Activated T-helper 2 cell treated with anti-CD3 and anti-CD28 coated beads, Interferon-gamma antibody, Interleukin-2, Interleukin-4, amounts not matched to agents 10 μg/mL and 5 μg/mL and 100 μg/mL, durations not matched to agents 14 hours and 24 hours and 36 hours (primary cell): ENCODE measurements at regions of chr1 and their contacts with region 1.

Region 1: DNA sequence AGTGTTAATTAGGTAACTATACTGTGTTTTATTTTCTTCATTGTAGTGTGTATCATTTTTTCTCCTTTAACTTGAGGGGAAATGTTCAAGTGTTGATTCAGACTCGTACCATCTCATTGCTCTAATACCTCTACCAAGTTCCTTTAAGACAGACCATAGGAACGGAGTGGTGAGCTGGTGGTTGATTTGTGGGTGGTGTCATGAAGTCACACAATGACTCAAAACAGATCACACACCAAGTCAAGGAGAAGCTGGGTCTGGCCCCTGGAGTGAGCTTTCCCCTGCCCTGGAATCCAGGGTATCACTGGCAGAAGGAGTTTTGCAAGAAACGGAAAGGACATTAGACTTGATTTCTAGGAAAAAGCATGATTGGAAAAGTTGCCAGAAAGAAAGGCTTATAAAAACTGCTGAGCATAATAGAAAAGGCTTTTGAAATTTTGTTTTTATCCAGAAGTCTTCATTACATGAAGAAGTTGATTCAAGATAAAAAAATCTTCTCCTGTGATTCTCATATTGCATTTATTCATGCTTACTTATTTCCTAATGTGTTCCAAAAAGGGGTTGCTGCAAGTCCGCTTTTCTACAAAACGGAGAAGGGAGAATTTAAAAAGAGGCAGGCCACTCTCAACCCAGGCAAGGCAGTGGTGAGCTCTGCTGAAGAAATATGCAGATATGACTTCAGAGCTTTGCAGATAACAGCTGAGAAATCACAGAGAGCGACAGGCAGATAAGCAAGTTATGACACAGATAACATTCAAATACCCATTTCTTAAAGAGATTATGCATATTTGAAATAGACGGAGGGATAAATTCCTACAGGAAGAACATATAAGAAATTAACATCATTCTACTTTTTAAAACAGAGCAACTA is 79.7 kb downstream of the TBX19 start:
- DNase-seq: peak; percentile 39
- H3K4me3 Mint-ChIP-seq: peak overlapping the region; percentile 18
- H3K27ac Mint-ChIP-seq: peak overlapping the region; percentile 92
- H3K4me1 Mint-ChIP-seq: peaks cover 69% of the 10 kb centered on the region
- H3K27me3 Mint-ChIP-seq: no peaks in the 10 kb centered on the region

Region 2: GRCh38 chr1:168234846-168235547 is 125.4 kb before region 1 on chr1:
- intact Hi-C with region 1: loop called (anchors 1 kb)
- DNase-seq: peak; percentile 51
- H3K4me3 Mint-ChIP-seq: peak overlapping the region; percentile 53
- H3K27ac Mint-ChIP-seq: peak overlapping the region; percentile 94
- H3K4me1 Mint-ChIP-seq: peaks cover 70% of the 10 kb centered on the region
- H3K27me3 Mint-ChIP-seq: no peaks in the 10 kb centered on the region

Region 3: GRCh38 chr1:168348146-168348709 is 12.2 kb before region 1 on chr1:
- intact Hi-C with region 1: loop called (anchors 1 kb)
- DNase-seq: no peak
- H3K4me3 Mint-ChIP-seq: peak overlapping the region; percentile 78
- H3K27ac Mint-ChIP-seq: peak overlapping the region; percentile 87
- H3K4me1 Mint-ChIP-seq: peaks cover 42% of the 10 kb centered on the region
- H3K27me3 Mint-ChIP-seq: no peaks in the 10 kb centered on the region

Region 4: GRCh38 chr1:168408536-168409242 is 48.3 kb after region 1 on chr1:
- intact Hi-C with region 1: loop called (anchors 1 kb)
- DNase-seq: peak; percentile 64
- H3K4me3 Mint-ChIP-seq: peak overlapping the region; percentile 40
- H3K27ac Mint-ChIP-seq: peak overlapping the region; percentile 90
- H3K4me1 Mint-ChIP-seq: peaks cover 48% of the 10 kb centered on the region
- H3K27me3 Mint-ChIP-seq: no peaks in the 10 kb centered on the region

Region 5: DNA sequence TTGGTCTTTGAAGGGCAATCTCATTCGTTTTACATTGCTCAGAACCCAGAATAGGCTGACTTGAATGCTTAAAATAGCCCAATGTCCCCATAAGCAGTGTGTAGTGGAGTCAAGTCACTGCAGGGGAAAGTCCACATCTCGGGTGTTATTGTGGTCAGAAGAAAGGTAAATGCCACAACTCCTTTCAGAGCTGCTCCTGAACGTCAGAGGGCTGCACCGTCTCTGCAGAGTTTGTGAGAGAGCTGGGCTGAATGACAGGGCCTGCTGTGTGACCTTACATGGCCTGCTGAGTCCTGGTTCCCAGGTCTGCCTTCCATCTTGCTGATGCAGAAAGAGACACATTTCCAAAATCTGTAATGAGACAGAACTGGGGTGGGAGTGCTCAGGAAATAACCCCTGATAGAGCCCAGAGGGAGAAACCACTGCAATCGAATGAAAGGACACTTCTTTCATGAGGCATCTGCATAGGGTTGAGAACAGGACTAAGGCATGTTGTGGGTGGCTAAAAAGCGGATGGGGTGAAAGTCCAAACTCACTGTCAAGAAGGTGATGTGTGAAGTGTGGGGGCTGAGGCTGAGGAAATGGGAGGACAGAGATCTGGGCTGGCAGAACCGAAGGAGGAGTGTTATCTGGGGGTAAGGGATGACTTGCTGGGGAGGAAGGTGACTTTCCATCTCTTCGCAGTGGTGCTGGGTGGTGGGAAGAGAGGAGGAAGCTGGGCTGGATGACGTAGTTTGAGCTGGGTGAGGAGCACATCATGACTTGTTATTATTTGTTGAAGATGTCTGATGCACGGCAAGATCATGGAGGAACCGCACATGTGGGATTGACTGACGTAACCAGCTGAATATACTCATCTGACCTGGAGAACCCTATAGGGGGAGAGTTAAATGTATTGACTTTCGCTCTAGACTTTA is 149.7 kb after region 1 on chr1:
- intact Hi-C with region 1: loop called (anchors 5 kb)
- DNase-seq: no peak
- H3K4me3 Mint-ChIP-seq: peak overlapping the region; percentile 1
- H3K27ac Mint-ChIP-seq: peak overlapping the region; percentile 87
- H3K4me1 Mint-ChIP-seq: peaks cover 86% of the 10 kb centered on the region
- H3K27me3 Mint-ChIP-seq: no peaks in the 10 kb centered on the region

Region 6: DNA sequence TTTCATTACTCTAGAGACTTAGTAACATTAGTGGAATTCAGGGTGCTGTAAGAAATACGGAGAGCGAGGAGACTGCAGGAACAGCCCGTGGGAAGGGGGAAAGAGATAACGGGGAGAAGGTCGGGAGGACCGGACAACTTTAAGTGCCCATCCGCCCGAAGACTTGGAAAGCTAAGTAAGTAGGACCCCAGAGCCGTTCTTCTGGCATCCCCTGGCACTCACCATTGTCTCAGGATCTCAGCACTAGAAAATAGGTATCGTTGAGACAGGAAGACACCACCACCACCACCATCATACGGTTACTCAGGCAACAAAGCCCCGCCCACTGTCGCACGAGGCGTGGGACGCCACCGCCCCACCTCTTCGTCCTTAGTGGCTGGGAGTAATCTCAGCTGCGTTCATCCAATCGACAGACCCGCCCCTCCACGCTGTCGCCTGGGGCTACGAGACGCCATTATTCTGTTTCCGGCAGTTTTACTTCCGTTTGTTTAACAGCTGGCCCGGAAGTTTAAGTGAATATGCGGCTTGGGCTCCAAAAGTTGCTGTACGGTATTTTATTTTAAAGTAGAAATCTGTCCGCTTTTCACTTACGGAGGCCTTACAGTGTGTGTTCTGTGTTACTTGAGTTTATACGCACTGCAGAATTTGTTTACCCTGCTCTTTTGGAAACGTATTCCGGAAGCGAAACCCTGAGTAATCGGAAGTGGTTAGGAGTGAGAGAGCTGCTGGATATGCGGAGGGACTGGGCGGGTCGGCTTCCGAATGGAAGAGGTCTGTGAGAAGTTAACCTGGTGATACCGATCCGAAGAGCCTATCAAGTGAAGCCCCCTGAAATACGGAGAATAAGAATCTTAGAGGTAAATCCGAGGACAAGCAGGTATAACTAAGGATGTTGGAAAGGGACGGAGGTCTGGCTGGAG is 1007.4 kb after region 1 on chr1 and contains the starts of genes BLZF1 and NME7:
- intact Hi-C with region 1: loop called (anchors 5 kb)
- DNase-seq: peak; percentile 98
- H3K4me3 Mint-ChIP-seq: peak within 1 kb of the TSS; percentile 67
- H3K27ac Mint-ChIP-seq: peak within 1 kb of the TSS; percentile 21
- H3K4me1 Mint-ChIP-seq: peaks cover 35% of the 10 kb centered on the region
- H3K27me3 Mint-ChIP-seq: no peaks in the 10 kb centered on the region
- total RNA-seq, gene BLZF1: 11.8 and 11.9 TPM in 2 replicates
- total RNA-seq, gene NME7: 14.1 and 23.4 TPM in 2 replicates

Region 7: GRCh38 chr1:169694304-169695075 is 1334.1 kb after region 1 on chr1:
- intact Hi-C with region 1: loop called (anchors 5 kb)
- DNase-seq: peak; percentile 55
- H3K4me3 Mint-ChIP-seq: peak overlapping the region; percentile 28
- H3K27ac Mint-ChIP-seq: peak overlapping the region; percentile 84
- H3K4me1 Mint-ChIP-seq: peaks cover 94% of the 10 kb centered on the region
- H3K27me3 Mint-ChIP-seq: no peaks in the 10 kb centered on the region